ENCODE measurements at regions of chr9 and their contacts with region 1.

Region 1: GRCh38 chr9:116494815-116495634 is 192.1 kb upstream of the TRIM32 start:
- DNase-seq: no peak
- ATAC-seq: peak; percentile 39 to 78
- H3K4me3 ChIP-seq: no peak overlapping the region
- H3K27ac ChIP-seq: no peak overlapping the region
- H3K4me1 ChIP-seq: no peaks in the 10 kb centered on the region
- H3K27me3 ChIP-seq: no peaks in the 10 kb centered on the region
- CTCF ChIP-seq: peak; percentile 46 to 71 (median 58)
- POLR2A ChIP-seq: no peak

Region 2: GRCh38 chr9:114889802-114890251 is 1605.2 kb before region 1 on chr9:
- in situ Hi-C with region 1: no loop called
- intact Hi-C with region 1: no loop called
- DNase-seq: no peak
- ATAC-seq: no peak
- H3K4me3 ChIP-seq: no peak overlapping the region
- H3K27ac ChIP-seq: no peak overlapping the region
- H3K4me1 ChIP-seq: no peaks in the 10 kb centered on the region
- H3K27me3 ChIP-seq: no peaks in the 10 kb centered on the region
- CTCF ChIP-seq: no peak
- POLR2A ChIP-seq: no peak

Region 3: DNA sequence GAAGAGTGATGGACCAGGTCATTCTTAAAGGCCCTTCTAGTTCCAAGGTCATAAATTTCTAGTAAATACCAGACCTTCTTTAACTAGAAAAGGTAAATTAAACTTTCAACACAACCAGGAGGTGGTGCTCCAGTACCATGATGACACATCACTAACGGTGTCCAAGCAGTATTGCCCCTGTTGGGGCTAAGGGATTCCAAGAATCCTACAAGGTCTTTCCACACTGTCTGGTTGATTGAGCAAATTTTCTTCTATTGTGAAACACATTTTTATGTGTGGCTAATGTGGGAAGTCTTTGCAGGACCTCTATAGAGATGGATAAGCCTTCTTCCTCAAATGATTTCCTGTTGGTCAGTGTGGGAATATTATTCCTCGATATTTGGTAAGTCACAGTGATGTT is 801.0 kb before region 1 on chr9:
- in situ Hi-C with region 1: no loop called
- intact Hi-C with region 1: loop called (anchors 5 kb)
- DNase-seq: peak in 1 of 2 donors; percentile 25
- ATAC-seq: peak; percentile 65 to 74
- H3K4me3 ChIP-seq: no peak overlapping the region
- H3K27ac ChIP-seq: no peak overlapping the region
- H3K4me1 ChIP-seq: no peaks in the 10 kb centered on the region
- H3K27me3 ChIP-seq: no peaks in the 10 kb centered on the region
- CTCF ChIP-seq: no peak
- POLR2A ChIP-seq: no peak

Region 4: DNA sequence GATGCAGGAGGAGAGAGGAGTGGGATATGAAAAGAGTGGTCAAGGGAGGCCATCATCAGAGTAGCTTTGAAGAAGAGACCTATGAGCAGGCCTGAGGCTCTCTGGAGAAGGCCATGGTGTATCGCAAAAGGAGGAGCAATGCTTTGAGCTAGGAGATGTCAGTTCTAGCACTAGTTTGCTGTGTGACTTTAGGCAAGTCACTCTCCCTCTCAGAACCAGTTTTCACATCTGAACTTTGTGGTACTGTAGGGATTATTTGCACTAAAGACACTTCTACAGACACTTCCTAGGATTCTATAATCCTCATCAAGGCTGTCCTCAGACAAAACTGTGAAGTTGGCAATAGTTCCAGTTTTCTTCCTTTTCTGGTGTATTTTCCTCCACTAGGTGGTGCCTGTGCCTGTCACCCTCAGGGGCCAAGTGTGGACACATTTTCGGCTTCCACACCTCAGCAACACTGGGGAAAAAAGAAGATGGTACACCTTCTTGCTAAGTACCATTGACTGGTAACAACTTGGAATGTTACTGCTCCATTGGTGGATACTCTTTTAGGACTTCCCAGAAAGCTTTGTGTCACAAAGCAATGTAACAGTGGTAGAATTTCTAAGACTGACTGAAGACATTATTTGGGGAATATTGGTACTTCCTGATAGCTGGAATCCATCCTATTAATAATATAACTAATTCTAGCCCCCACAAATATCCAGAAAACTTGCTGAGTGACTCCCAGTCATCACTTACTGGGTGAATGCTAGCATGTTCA is 331.6 kb before region 1 on chr9:
- in situ Hi-C with region 1: loop called in 1 of 4 experiments (anchors 10 kb)
- intact Hi-C with region 1: loop called (anchors 10 kb)
- DNase-seq: no peak
- ATAC-seq: peak in 1 of 2 donors; percentile 58
- H3K4me3 ChIP-seq: no peak overlapping the region
- H3K27ac ChIP-seq: no peak overlapping the region
- H3K4me1 ChIP-seq: no peaks in the 10 kb centered on the region
- H3K27me3 ChIP-seq: no peaks in the 10 kb centered on the region
- CTCF ChIP-seq: peak in 3 of 5 experiments; percentile 15 to 48 (median 39)
- POLR2A ChIP-seq: no peak

Region 5: GRCh38 chr9:116646661-116647512 is 151.9 kb after region 1 on chr9:
- in situ Hi-C with region 1: no loop called
- intact Hi-C with region 1: no loop called
- DNase-seq: no peak
- ATAC-seq: peak; percentile 76 to 79
- H3K4me3 ChIP-seq: no peak overlapping the region
- H3K27ac ChIP-seq: peak overlapping the region; percentile 81 to 93 (median 82)
- H3K4me1 ChIP-seq: peaks cover 20 to 55% of the 10 kb centered on the region in 2 donors
- H3K27me3 ChIP-seq: no peaks in the 10 kb centered on the region
- CTCF ChIP-seq: peak; percentile 34 to 61 (median 44)
- POLR2A ChIP-seq: no peak